CD4-positive, alpha-beta T cell (primary cell): ENCODE measurements at regions of chr17 and their contacts with region 1.

Region 1: GRCh38 chr17:47895856-47896671 is at the start of gene SP2:
- DNase-seq: peak; percentile 97 to 100 (median 99)
- ATAC-seq: peak; percentile 86
- H3K4me3 ChIP-seq: peak within 1 kb of the TSS; percentile 96
- H3K4me3 Mint-ChIP-seq: peak within 1 kb of the TSS; percentile 100
- H3K27ac ChIP-seq: peak within 1 kb of the TSS; percentile 95 to 98
- H3K27ac Mint-ChIP-seq: peak within 1 kb of the TSS; percentile 94
- H3K4me1 ChIP-seq: peaks cover 34% of the 10 kb centered on the region
- H3K4me1 Mint-ChIP-seq: peaks cover 58% of the 10 kb centered on the region
- H3K27me3 ChIP-seq: no peaks in the 10 kb centered on the region
- H3K27me3 Mint-ChIP-seq: no peaks in the 10 kb centered on the region
- CTCF ChIP-seq: no peak
- total RNA-seq, gene SP2: 19.9 to 21.5 TPM

Region 2: DNA sequence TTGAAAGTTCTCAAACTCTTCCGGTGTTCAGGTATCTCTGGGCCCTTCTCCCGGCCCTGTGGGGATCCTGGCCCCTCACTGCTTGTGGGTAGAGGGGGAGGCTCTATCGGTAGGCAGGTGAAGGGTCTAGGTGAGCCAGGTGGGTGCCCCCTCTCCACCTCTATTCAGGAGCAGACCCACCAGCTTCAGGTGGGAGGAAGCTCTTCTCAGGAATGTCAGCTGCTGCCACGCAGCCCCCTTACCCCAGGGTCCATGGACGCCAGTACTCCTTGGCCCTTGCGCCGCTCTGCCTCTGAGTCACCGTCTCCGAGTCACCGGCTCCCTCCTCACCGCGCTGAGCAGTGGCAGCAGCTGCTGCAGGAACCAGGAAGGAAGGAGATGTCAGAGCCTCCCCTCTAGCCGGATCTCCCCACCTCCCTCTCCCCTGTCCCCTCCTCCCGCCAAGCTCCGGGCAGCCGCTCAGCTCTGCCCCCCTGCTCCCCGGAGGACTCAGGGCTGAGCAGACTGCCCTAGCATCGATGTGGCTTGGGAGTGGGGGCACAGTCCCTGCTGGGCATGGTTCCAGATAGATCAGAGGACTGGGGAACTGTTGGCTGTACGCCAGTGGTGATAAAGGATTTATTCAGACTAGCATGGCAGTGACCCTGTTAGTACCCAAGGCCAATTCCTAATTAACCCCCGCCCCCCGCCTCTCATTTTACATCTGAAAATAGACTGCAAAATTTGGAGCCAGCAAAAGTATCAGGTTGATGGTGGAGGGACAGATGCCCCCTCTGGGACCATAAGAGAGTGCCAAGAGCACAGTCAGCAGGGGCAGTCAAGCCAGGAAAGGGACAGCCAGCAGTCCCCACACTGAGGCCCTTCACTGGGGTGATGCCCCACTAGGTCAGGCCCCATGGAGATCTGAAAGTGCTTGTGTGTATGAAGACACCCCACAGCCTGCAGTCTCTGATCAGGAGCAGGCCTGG is 74.4 kb before region 1 on chr17 and contains the start of gene OSBPL7:
- CTCF ChIA-PET with region 1: interaction called, 5 read pairs
- POLR2A ChIA-PET with region 1: interaction called, 17 read pairs
- intact Hi-C with region 1: no loop called
- DNase-seq: peak; percentile 57 to 90 (median 78)
- ATAC-seq: peak; percentile 98
- H3K4me3 ChIP-seq: peak within 1 kb of the TSS; percentile 72
- H3K4me3 Mint-ChIP-seq: peak within 1 kb of the TSS; percentile 97
- H3K27ac ChIP-seq: peak within 1 kb of the TSS; percentile 55 to 62
- H3K27ac Mint-ChIP-seq: peak within 1 kb of the TSS; percentile 92
- H3K4me1 ChIP-seq: peaks cover 32% of the 10 kb centered on the region
- H3K4me1 Mint-ChIP-seq: peaks cover 25% of the 10 kb centered on the region
- H3K27me3 ChIP-seq: no peaks in the 10 kb centered on the region
- H3K27me3 Mint-ChIP-seq: no peaks in the 10 kb centered on the region
- CTCF ChIP-seq: no peak
- total RNA-seq, gene OSBPL7: 30.1 to 30.8 TPM

Region 3: GRCh38 chr17:47840740-47841603 is 55.1 kb before region 1 on chr17 and contains the start of gene SCRN2:
- CTCF ChIA-PET with region 1: interaction called, 86 read pairs
- POLR2A ChIA-PET with region 1: interaction called, 46 read pairs
- intact Hi-C with region 1: no loop called
- DNase-seq: peak; percentile 70 to 91 (median 84)
- ATAC-seq: peak; percentile 89
- H3K4me3 ChIP-seq: peak within 1 kb of the TSS; percentile 73
- H3K4me3 Mint-ChIP-seq: peak within 1 kb of the TSS; percentile 94
- H3K27ac ChIP-seq: peak within 1 kb of the TSS in 1 of 2 donors; percentile 47
- H3K27ac Mint-ChIP-seq: peak within 1 kb of the TSS; percentile 41
- H3K4me1 ChIP-seq: peaks cover 38% of the 10 kb centered on the region
- H3K4me1 Mint-ChIP-seq: peaks cover 26% of the 10 kb centered on the region
- H3K27me3 ChIP-seq: peaks cover 18 to 19% of the 10 kb centered on the region in 2 experiments
- H3K27me3 Mint-ChIP-seq: peaks cover 23% of the 10 kb centered on the region
- CTCF ChIP-seq: peak; percentile 93
- total RNA-seq, gene SCRN2: 15.3 to 17.2 TPM

Region 4: DNA sequence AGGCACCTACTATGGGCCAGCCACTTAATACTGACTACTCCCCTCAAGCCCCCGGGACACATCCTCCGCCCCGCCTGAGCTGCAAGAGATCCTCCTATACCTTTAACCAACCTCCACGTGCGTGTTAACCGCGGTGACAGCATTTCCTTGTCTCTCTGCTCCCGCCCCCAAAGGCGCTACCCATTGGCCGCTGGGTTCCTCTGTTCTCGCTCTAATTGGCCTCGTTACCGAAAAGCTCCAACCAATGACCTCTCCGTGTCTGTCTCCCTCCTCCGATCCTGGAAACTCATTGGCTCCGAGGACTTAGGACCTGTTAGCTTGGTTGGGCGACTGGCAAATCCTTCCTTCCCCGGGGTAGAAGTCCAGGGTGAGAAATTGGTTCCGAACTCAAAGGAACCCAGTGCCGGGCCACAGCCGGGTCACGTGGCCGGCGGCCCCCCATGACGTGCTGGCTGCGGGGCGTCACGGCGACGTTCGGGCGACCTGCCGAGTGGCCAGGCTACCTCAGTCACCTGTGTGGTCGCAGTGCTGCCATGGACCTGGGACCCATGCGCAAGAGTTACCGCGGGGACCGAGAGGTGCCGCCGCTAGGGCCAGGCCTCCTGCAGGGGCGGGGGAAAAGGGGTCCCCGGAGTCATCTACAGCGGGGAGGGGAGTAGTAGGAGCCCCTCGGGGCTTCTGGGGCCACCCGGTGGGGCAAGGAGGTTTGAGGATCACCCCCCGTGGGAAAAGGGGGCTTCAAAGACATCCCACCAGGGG is 45.4 kb after region 1 on chr17 and contains the start of gene PNPO:
- CTCF ChIA-PET with region 1: no interaction called
- POLR2A ChIA-PET with region 1: interaction called, 49 read pairs
- intact Hi-C with region 1: loop called (anchors 1 to 2 kb)
- DNase-seq: peak; percentile 83 to 98 (median 88)
- ATAC-seq: peak; percentile 98
- H3K4me3 ChIP-seq: peak within 1 kb of the TSS; percentile 97
- H3K4me3 Mint-ChIP-seq: peak within 1 kb of the TSS; percentile 87
- H3K27ac ChIP-seq: peak within 1 kb of the TSS; percentile 66 to 82
- H3K27ac Mint-ChIP-seq: peak within 1 kb of the TSS; percentile 8
- H3K4me1 ChIP-seq: peaks cover 45% of the 10 kb centered on the region
- H3K4me1 Mint-ChIP-seq: peaks cover 36% of the 10 kb centered on the region
- H3K27me3 ChIP-seq: no peaks in the 10 kb centered on the region
- H3K27me3 Mint-ChIP-seq: no peaks in the 10 kb centered on the region
- CTCF ChIP-seq: no peak
- total RNA-seq, gene PNPO: 2.2 to 2.4 TPM

Region 5: GRCh38 chr17:48107168-48108132 is 211.4 kb after region 1 on chr17 and contains the start of gene SNX11:
- CTCF ChIA-PET with region 1: no interaction called
- POLR2A ChIA-PET with region 1: interaction called, 5 read pairs
- intact Hi-C with region 1: loop called in 1 of 2 experiments (anchors 5 kb)
- DNase-seq: peak; percentile 86 to 97 (median 94)
- ATAC-seq: peak; percentile 93
- H3K4me3 ChIP-seq: peak within 1 kb of the TSS; percentile 92
- H3K4me3 Mint-ChIP-seq: peak within 1 kb of the TSS; percentile 97
- H3K27ac ChIP-seq: peak within 1 kb of the TSS; percentile 84 to 93
- H3K27ac Mint-ChIP-seq: peak within 1 kb of the TSS; percentile 88
- H3K4me1 ChIP-seq: peaks cover 40% of the 10 kb centered on the region
- H3K4me1 Mint-ChIP-seq: peaks cover 63% of the 10 kb centered on the region
- H3K27me3 ChIP-seq: no peaks in the 10 kb centered on the region
- H3K27me3 Mint-ChIP-seq: no peaks in the 10 kb centered on the region
- CTCF ChIP-seq: no peak
- total RNA-seq, gene SNX11: 6.8 to 8.7 TPM